HepG2 (cell line): ENCODE measurements at regions of chr6 and their contacts with region 1.

Region 1: GRCh38 chr6:95837890-95838289 is 177.9 kb upstream of the FUT9 start:
- DNase-seq: peak; percentile 36
- ATAC-seq: peak; percentile 82
- H3K4me3 ChIP-seq: no peak overlapping the region
- H3K27ac ChIP-seq: peak overlapping the region; percentile 51
- H3K4me1 ChIP-seq: peaks cover 41% of the 10 kb centered on the region
- H3K27me3 ChIP-seq: no peaks in the 10 kb centered on the region
- CTCF ChIP-seq: no peak
- EP300 ChIP-seq: 0 out of 4 replicates have a peak, but pooled peaks of 1 of the 2 experiments have one; percentile 16
- POLR2A ChIP-seq: no peak
- RAD21 ChIP-seq: no peak

Region 2: GRCh38 chr6:95804847-95805541 is 32.9 kb before region 1 on chr6:
- CTCF ChIA-PET with region 1: no interaction called
- POLR2A ChIA-PET with region 1: no interaction called
- in situ Hi-C with region 1: no loop called
- intact Hi-C with region 1: loop called (anchors 2 kb)
- DNase-seq: peak; percentile 98
- ATAC-seq: peak; percentile 98
- H3K4me3 ChIP-seq: peak overlapping the region in 1 of 3 experiments; percentile 13; a peak in 1 of 6 replicates
- H3K27ac ChIP-seq: peak overlapping the region; percentile 85
- H3K4me1 ChIP-seq: peaks cover 68% of the 10 kb centered on the region
- H3K27me3 ChIP-seq: no peaks in the 10 kb centered on the region
- CTCF ChIP-seq: no peak
- EP300 ChIP-seq: peak; percentile 94 to 99; a peak in 3 of 4 replicates
- POLR2A ChIP-seq: no peak
- RAD21 ChIP-seq: no peak